ENCODE measurements at regions of chr17 and their contacts with region 1.

Region 1: DNA sequence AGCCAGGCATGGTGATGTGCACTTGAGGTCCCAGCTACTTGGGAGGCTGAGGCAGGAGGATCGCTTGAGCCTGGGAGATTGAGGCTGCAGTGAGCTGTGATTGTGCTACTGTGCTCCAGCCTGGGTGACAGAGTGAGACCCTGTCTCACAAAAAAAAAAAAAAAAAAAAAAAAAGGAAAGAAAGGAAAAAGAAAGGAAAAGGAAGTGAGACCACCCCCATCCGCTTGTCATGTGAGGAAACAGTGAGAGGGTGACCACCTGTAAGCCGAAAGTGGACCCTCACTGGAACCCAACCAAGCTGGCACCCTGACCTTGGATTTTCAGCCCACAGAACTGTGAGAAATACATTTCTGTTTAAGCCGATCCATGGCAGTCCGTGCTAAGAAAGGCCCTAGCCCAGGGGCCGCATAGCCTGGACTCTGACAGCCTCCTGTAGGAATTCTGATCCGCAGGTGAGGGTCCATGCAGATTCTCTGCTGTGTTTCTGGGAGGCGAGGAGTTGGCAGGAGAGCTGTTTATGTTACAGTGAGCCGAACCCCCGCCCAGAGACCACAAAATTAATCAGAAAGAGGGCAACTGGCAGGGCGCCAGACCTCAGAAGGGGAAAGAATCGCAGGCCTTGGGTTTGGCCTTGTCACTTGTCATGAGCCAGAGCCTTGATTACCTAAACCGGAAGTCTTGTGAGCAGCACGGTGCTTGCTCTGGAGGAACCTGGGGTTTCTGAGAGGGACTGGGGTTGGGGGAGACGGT is 945 bp downstream of the SGSH start:
- DNase-seq: peak; percentile 97
- H3K4me3 Mint-ChIP-seq: peak overlapping the region; percentile 88
- H3K27ac Mint-ChIP-seq: peak overlapping the region; percentile 88
- H3K4me1 Mint-ChIP-seq: peaks cover 19% of the 10 kb centered on the region
- H3K27me3 Mint-ChIP-seq: no peaks in the 10 kb centered on the region

Region 2: DNA sequence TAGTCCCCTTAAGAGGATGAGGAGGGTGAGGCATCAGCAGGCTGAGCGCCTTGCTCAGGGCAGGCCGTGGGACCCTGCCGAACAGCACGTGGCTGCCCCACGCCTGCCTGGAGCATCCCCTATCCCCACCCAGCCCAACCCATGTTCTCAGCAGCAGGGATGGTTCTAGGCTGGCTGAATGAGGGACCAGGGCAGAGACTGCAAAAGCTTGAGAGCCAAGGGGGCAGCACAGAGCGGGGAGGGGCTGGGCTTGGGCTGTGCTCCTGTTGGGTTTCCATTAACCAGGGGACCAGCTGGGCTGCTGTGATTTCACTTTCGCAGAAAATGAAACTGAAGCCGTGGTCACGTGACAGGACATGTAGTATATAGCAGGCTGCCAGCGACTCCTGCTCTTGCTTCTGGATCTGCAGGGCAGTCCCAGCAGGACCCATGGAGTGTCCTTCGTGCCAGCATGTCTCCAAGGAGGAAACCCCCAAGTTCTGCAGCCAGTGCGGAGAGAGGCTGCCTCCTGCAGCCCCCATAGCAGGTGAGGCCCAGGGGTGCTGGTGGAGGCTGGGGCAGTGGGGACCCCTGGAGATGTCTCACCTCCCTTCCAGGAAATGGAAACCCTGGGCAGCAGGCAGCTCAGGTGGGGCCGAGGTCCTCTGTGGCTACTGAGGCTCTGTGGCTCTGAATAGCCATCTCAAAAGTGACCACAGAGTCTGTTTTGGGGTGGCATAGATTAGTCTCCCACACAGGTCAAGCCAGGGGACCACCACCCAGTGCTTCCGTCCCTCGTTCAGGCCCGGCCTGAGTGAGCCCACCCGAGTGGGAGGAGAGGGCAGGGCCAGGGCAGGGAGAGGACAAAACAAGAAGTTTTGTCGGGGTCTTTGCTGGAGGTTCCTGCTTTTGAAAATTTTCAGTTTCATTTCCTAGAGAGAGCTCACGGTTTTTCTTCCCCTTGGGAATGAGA is 44.3 kb after region 1 on chr17:
- CTCF ChIA-PET with region 1: no interaction called
- intact Hi-C with region 1: loop called (anchors 2 kb)
- DNase-seq: peak; percentile 95
- H3K4me3 Mint-ChIP-seq: peak overlapping the region; percentile 96
- H3K27ac Mint-ChIP-seq: peak overlapping the region; percentile 92
- H3K4me1 Mint-ChIP-seq: peaks cover 60% of the 10 kb centered on the region
- H3K27me3 Mint-ChIP-seq: no peaks in the 10 kb centered on the region